Gastrocnemius medialis (tissue), 4 donors: ENCODE measurements at regions of chr4 and their contacts with region 1.

Region 1: DNA sequence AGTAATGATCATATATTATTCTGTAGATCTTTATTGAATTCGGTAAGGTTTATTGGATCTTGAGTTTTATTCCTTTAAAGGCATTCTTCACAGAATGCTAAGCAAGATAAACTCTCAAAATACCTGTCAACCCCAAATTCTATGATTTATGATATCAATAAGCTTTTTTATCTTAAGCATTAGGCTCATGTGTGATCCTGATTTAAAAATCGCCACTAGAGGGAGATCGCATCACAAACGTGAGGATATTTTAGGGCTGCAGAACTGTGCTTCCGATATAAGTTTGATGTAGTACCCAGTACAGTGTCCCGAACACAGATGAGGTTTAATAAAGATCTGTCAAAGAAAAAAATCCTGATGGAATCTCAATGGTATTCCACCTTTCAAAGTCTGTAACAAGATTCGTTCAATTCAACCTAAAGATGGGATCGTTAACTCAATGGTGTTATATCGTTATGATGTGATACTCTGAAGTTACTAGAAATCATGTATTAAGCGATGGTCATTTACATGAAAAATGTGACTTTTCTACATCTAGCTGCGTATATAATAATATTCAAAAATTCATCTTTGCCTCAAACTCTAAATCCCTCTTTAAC is 169.0 kb downstream of the CORIN start:
- DNase-seq: no peak
- ATAC-seq: no peak
- H3K4me3 ChIP-seq: no peak overlapping the region
- H3K27ac ChIP-seq: no peak overlapping the region
- H3K4me1 ChIP-seq: no peaks in the 10 kb centered on the region
- H3K27me3 ChIP-seq: no peaks in the 10 kb centered on the region
- CTCF ChIP-seq: peak in 3 of 5 experiments; percentile 38 to 57 (median 56)
- POLR2A ChIP-seq: no peak

Region 2: DNA sequence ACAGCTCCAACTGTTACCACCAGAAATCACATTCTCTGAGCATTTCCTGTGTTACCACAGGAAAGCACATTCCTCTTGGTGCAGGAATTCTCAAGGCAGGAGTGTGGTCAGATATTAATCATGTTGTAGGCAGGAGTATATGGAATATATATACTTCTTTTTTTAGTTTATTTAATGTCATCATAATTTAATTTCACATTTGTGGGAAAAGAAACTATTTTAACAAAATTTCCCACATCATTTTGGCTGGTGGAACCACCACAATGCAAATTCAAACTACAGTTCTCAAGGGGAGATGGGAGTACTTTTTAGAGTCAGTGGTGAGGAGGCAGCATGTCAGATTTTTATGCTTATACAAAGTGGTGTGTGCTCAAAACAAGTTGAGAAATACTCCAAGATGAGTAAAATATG is 44.9 kb before region 1 on chr4:
- in situ Hi-C with region 1: no loop called
- intact Hi-C with region 1: no loop called
- DNase-seq: no peak
- ATAC-seq: no peak
- H3K4me3 ChIP-seq: no peak overlapping the region
- H3K27ac ChIP-seq: no peak overlapping the region
- H3K4me1 ChIP-seq: no peaks in the 10 kb centered on the region
- H3K27me3 ChIP-seq: no peaks in the 10 kb centered on the region
- CTCF ChIP-seq: no peak
- POLR2A ChIP-seq: no peak

Region 3: DNA sequence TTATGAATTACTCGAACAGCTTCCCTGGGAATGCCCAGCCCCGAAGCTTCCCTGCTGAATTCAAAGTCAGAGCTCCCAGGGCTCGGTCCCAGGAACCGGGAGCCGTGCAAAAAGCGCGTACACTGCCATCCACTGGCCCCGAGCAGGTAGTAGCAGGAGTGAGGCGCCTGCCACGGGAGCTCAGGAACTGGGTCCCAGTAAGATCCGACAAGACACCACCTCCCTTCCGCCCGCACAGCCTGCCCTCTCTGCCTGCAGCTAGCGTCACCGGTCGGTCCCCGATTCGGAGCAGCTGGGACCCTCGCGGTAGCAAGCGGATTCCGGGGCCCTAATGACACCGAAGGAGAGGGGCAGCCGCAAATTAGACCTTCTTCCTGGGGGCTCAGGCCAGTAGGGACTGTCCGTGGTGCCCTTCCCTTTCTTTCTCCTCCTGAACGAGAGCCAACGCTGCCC is 167.8 kb after region 1 on chr4:
- in situ Hi-C with region 1: no loop called
- intact Hi-C with region 1: no loop called
- DNase-seq: peak; percentile 20 to 42
- ATAC-seq: peak; percentile 76 to 77
- H3K4me3 ChIP-seq: peak overlapping the region; percentile 26 to 53 (median 50)
- H3K27ac ChIP-seq: no peak overlapping the region
- H3K4me1 ChIP-seq: peaks cover 18 to 21% of the 10 kb centered on the region in 2 donors
- H3K27me3 ChIP-seq: peaks cover 7 to 19% (median 14%) of the 10 kb centered on the region in 3 donors
- CTCF ChIP-seq: peak; percentile 27 to 70 (median 54)
- POLR2A ChIP-seq: no peak

Region 4: DNA sequence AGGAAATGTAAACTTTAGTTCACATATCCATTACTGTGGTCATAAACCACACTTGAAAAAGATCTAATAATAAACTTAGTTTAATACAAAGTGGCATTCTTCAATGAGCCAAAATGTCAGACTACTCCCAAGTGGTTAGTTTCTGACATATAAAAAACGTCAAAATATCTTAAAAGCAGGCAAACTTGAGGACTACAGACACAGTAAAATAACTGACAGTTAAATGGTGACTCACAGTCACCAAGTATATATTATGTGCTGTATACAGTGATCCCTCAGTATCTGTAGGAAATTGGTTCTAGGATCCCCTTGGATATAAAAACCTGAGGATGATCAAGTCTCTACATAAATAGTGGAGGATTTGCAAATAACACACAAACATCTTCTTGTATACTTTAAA is 180.6 kb after region 1 on chr4:
- in situ Hi-C with region 1: no loop called
- intact Hi-C with region 1: no loop called
- DNase-seq: no peak
- ATAC-seq: no peak
- H3K4me3 ChIP-seq: no peak overlapping the region
- H3K27ac ChIP-seq: no peak overlapping the region
- H3K4me1 ChIP-seq: no peaks in the 10 kb centered on the region
- H3K27me3 ChIP-seq: no peaks in the 10 kb centered on the region
- CTCF ChIP-seq: no peak
- POLR2A ChIP-seq: no peak

Region 5: DNA sequence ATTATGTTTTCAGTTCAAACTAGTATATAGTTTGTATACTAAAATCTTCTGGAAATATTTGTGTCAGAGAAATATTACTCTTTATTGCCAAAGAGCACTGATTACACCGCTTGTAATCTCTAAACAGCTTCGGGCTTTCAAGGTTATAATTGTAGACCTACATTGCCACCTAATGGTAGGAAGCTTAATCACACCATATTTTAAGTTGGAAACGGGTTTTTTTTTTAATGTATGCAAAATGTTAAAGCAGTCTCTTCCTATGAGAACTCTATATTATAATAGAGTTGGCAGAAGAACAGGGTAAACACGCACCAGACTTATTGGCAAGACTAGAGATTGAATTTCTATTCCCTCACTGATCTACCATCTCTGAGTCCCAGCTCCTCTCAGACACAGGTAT is 264.9 kb after region 1 on chr4:
- in situ Hi-C with region 1: no loop called
- intact Hi-C with region 1: loop called (anchors 5 kb)
- DNase-seq: no peak
- ATAC-seq: no peak
- H3K4me3 ChIP-seq: no peak overlapping the region
- H3K27ac ChIP-seq: no peak overlapping the region
- H3K4me1 ChIP-seq: no peaks in the 10 kb centered on the region
- H3K27me3 ChIP-seq: no peaks in the 10 kb centered on the region
- CTCF ChIP-seq: peak in 4 of 5 experiments; percentile 26 to 60 (median 34)
- POLR2A ChIP-seq: no peak